Right ventricle myocardium inferior (tissue), 1 donor: ENCODE measurements at regions of chr9 and their contacts with region 1.

Region 1: DNA sequence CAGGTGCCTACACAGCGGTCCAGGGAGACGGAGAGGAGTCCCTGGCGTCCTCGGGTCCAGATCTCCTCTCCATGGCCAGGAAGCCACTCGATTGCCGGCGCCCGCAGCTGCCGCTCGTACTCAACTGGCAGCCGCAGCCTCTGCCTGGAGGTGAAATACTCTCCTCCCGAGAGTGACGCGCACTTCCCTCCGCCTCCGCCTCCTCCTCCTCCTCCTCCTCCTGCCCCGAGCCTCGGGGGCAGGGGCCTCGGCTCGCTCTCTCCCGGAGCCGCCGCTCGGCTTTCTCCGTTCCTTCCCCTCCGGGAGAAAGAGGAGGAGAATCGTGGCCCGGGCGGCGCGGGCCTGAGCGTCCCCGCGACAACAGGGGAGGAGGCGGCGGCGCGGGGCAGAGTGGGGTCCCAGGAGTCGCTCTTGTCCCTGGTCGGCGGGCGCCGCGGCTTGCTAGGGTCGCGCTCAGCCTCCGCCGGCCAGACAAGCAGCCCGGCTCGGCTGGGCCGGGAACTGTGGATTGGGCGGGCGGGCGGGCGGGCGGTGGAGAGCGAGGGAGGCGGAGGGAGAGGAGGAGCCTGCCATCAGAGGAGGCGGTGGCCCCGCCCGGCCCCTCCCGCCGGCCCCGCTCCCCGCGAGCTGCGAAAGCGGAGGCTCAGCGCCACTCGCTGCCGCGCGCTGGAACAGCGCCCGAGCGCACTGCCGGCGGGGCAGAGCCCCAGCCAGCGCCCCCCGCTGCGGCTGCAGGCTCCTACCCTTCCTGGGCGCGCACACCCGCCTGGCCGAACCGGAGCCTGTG is at the start of gene CEMIP2:
- DNase-seq: peak; percentile 95
- ATAC-seq: peak; percentile 93
- total RNA-seq, gene CEMIP2: 9.3 TPM

Region 2: GRCh38 chr9:71604197-71605063 is 164.2 kb before region 1 on chr9:
- intact Hi-C with region 1: loop called (anchors 5 kb)
- DNase-seq: peak; percentile 84
- ATAC-seq: peak; percentile 68

Region 3: GRCh38 chr9:71716138-71716909 is 52.3 kb before region 1 on chr9:
- intact Hi-C with region 1: loop called (anchors 5 kb)
- DNase-seq: no peak
- ATAC-seq: no peak

Region 4: DNA sequence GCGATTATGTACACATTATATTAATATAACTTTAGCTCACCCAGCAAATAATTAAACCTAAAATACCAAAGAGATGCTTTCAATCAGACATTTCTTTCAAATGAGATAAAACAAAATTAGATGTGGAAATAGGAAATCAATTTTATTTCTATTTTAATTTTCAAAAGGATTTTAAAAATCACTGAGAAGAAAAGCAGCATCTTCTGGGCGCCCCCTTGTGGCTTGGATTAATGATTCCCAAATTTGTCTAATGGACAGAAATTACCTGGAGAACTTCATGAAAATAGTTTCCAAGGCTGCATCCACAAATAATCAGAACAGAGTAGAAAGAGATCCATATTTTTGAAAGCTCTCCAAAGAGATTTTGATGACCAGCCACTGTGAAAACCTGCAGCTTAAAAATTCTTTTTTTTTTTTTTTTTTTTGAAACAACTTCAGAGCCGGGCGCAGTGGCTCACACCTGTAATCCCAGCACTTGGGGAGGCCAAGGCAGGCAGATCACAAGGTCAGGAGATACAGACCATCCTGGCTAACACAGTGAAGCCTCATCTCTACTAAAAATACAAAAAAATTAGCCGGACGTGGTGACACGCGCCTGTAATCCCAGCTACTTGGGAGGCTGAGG is 50.6 kb after region 1 on chr9:
- intact Hi-C with region 1: loop called (anchors 10 kb)
- DNase-seq: no peak
- ATAC-seq: no peak